Sigmoid colon (tissue), 7 donors: ENCODE measurements at regions of chr5 and their contacts with region 1.

Region 1: GRCh38 chr5:66814146-66814991 is 218.2 kb downstream of the MAST4 start:
- DNase-seq: no peak
- H3K4me3 ChIP-seq: no peak overlapping the region
- H3K27ac ChIP-seq: no peak overlapping the region
- H3K4me1 ChIP-seq: peaks cover 0 to 2% (median 0%) of the 10 kb centered on the region in 4 donors
- H3K27me3 ChIP-seq: no peaks in the 10 kb centered on the region
- CTCF ChIP-seq: peak in 3 of 4 experiments; percentile 37 to 72 (median 38)
- EP300 ChIP-seq: no peak
- POLR2A ChIP-seq: no peak

Region 2: GRCh38 chr5:67149951-67150523 is 335.7 kb after region 1 on chr5:
- intact Hi-C with region 1: loop called (anchors 5 kb)
- DNase-seq: no peak
- H3K4me3 ChIP-seq: peak overlapping the region in 2 of 4 donors; percentile 19 to 23
- H3K27ac ChIP-seq: peak overlapping the region in 1 of 4 donors; percentile 43
- H3K4me1 ChIP-seq: no peaks in the 10 kb centered on the region
- H3K27me3 ChIP-seq: no peaks in the 10 kb centered on the region
- CTCF ChIP-seq: peak in 3 of 4 experiments; percentile 37 to 46 (median 37)
- EP300 ChIP-seq: no peak
- POLR2A ChIP-seq: no peak